ENCODE measurements at regions of chr4 and their contacts with region 1.

Region 1: GRCh38 chr4:48002267-48002666 is 14.2 kb downstream of the CNGA1 start:
- DNase-seq: no peak
- H3K4me3 ChIP-seq: no peak overlapping the region
- H3K27ac ChIP-seq: no peak overlapping the region
- H3K4me1 ChIP-seq: no peaks in the 10 kb centered on the region
- H3K27me3 ChIP-seq: no peaks in the 10 kb centered on the region
- CTCF ChIP-seq: no peak

Region 2: DNA sequence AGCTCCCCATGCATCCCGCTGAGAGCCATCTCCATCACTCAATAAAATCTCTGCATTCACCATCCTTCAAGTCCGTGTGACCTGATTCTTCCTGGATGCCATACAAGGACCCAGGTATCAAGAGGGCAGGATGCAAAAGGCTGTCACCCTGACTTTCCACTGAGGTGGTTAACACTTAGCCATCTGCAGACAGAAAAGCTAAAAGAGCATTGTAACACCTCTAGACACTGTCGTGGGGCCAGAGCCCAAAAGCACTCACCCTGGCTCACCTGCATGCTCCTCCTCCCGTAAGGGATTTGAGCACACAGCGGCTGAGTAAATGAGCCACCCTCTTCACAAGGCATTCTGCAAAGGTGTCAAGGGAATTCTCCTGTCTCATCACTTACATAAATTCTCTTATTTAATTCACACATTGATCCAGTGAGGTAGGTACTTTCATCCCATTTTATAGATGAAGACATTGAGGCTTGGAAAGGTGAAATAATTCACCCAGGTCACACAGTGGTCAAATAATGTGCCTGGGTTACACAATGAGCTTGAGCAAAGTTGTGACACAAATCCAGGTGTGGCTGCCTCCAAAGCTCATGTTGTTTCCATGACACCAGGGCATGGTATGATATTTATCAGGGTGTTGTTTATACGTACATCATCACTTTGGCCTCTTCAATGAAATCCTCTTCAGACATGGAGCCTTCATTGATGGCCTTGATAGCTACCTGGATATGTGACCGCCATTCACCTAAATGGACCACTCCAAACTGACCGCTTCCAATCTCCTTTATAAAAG is 83.7 kb after region 1 on chr4:
- intact Hi-C with region 1: loop called (anchors 5 kb)
- DNase-seq: no peak
- H3K4me3 ChIP-seq: no peak overlapping the region
- H3K27ac ChIP-seq: no peak overlapping the region
- H3K4me1 ChIP-seq: no peaks in the 10 kb centered on the region
- H3K27me3 ChIP-seq: no peaks in the 10 kb centered on the region
- CTCF ChIP-seq: no peak

Region 3: DNA sequence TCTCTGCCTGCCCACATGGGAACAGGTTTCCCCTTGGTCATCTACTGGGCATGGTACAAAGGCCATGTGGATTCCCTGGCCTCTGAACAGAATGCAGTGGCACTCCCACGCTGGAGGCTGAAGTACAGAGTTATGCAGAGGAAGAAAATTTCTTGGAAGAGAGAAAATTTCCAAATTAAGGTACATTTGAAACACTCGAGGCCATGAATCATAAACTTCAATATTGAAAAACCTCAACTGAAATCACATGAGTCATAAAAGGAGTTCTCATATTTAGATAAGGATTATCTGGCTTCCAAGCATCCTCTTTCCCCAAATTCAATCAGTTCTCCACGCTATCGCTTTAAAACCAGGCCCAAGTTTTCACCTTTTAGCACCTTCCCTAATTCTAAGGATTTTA is 159.9 kb after region 1 on chr4:
- intact Hi-C with region 1: no loop called
- DNase-seq: no peak
- H3K4me3 ChIP-seq: no peak overlapping the region
- H3K27ac ChIP-seq: peak overlapping the region in 1 of 2 donors; percentile 10
- H3K4me1 ChIP-seq: no peaks in the 10 kb centered on the region
- H3K27me3 ChIP-seq: no peaks in the 10 kb centered on the region
- CTCF ChIP-seq: no peak

Measured in tibial artery (tissue), 4 donors.